ENCODE measurements at regions of chr12 and their contacts with region 1.

Region 1: DNA sequence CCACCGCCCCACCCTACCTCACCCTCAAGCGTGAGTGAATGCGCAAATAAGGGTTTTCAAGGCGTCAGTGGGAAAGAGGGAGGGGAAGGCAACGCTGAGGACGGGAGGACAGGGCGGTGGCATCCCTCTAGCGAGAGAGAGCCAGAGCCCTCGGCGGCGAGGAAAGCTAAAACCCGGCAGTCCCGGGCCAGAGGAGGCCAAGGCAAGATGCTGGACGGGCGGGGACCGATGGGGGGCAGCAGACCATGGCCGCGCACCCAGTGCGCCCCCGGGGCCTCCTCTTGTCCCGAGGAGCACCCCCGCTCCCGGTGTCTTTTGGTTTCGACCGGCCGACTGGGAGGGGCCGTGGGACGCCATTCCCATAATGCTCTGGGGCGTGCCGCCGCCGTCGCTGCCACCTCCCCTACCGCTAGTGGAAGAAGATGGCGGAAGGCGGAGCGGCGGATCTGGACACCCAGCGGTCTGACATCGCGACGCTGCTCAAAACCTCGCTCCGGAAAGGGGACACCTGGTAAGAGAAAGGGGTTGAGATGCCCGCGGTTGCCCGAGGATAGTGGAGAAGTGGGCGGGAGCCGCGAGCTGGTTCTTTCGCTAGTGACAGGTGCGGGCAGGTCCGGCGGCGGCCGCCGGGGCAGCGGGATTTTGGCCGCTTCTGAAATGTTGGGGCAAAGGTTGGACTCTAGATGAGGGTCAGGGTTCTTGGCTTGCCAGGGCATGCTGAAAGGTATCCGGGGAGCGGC is at the start of gene USP15:
- DNase-seq: peak; percentile 95
- ATAC-seq: peak; percentile 82
- H3K4me3 Mint-ChIP-seq: peak within 1 kb of the TSS; percentile 100
- H3K27ac Mint-ChIP-seq: peak within 1 kb of the TSS; percentile 100
- H3K4me1 Mint-ChIP-seq: peaks cover 53% of the 10 kb centered on the region
- H3K27me3 Mint-ChIP-seq: no peaks in the 10 kb centered on the region
- CTCF ChIP-seq: no peak
- total RNA-seq, gene USP15: 122 and 150 TPM in 2 replicates

Region 2: GRCh38 chr12:62297321-62297720 is 37.2 kb after region 1 on chr12:
- CTCF ChIA-PET with region 1: no interaction called
- POLR2A ChIA-PET with region 1: no interaction called
- intact Hi-C with region 1: loop called (anchors 5 kb)
- DNase-seq: no peak
- ATAC-seq: no peak
- H3K4me3 Mint-ChIP-seq: no peak overlapping the region
- H3K27ac Mint-ChIP-seq: no peak overlapping the region
- H3K4me1 Mint-ChIP-seq: peaks cover 58% of the 10 kb centered on the region
- H3K27me3 Mint-ChIP-seq: no peaks in the 10 kb centered on the region
- CTCF ChIP-seq: no peak

Region 3: DNA sequence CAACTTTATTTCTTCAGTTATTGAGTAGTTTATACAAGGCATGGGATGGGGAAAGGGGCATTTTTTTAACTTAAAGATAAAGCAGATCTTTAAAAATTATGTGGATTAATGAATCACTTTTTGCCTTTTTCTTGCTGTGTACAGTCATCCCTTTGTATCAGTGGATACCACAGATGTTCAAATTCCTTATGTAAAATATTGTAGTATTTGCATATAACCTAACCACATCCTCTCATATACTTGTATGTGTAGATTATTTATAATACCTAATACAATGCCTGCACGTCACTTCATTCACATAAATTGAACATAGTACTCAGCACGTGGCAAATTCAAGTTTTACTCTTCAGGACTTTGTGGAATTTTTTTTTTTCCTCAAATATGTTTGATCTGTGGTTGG is 140.0 kb after region 1 on chr12:
- CTCF ChIA-PET with region 1: no interaction called
- POLR2A ChIA-PET with region 1: no interaction called
- intact Hi-C with region 1: loop called (anchors 5 kb)
- DNase-seq: no peak
- ATAC-seq: no peak
- H3K4me3 Mint-ChIP-seq: no peak overlapping the region
- H3K27ac Mint-ChIP-seq: no peak overlapping the region
- H3K4me1 Mint-ChIP-seq: peaks cover 21% of the 10 kb centered on the region
- H3K27me3 Mint-ChIP-seq: no peaks in the 10 kb centered on the region
- CTCF ChIP-seq: no peak

Region 4: GRCh38 chr12:62799126-62799736 is 539.1 kb after region 1 on chr12:
- CTCF ChIA-PET with region 1: no interaction called
- POLR2A ChIA-PET with region 1: no interaction called
- intact Hi-C with region 1: loop called (anchors 10 kb)
- DNase-seq: no peak
- ATAC-seq: peak; percentile 93
- H3K4me3 Mint-ChIP-seq: no peak overlapping the region
- H3K27ac Mint-ChIP-seq: no peak overlapping the region
- H3K4me1 Mint-ChIP-seq: peaks cover 3% of the 10 kb centered on the region
- H3K27me3 Mint-ChIP-seq: peaks cover 2% of the 10 kb centered on the region
- CTCF ChIP-seq: peak; percentile 75

Region 5: DNA sequence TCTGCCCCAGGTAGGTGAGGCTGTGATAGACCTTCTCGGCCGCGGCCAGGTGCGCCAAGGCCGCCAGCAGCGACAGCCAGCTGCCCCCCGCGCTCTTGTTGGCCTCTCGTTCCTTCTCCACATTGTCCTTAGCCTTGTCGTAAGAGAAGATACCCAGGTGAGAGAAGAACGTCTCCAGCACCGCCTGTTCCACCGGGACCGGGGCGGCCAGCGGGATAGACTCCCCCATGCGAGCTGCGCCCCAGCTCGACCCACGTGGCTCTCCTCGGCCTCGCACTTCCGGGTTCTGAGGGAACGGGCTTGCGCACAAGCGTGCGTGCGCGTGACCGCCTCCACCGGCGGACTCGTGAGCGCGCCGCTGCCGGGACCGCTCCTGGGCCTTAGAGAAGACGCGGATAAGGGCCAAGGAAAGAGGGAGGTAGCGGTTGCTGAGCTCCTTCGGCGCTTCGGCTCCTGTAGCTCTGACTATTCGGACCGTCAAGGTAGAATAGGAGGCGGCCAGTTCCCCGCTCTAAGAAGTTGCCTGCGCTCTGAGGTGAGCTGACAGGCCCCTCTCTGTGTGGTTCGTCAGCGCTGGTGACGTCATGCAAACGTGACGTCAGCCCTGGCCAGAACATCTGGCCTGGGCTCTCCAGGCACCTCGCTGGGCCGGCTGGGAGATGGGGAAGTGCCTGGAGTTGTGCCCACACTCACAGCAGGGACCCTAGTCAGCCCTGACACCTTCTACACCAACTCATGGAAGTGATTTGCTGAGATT is 1962.0 kb after region 1 on chr12 and contains the start of gene KICS2:
- CTCF ChIA-PET with region 1: no interaction called
- POLR2A ChIA-PET with region 1: no interaction called
- intact Hi-C with region 1: loop called (anchors 1 kb)
- DNase-seq: peak; percentile 90
- ATAC-seq: peak; percentile 86
- H3K4me3 Mint-ChIP-seq: peak within 1 kb of the TSS; percentile 96
- H3K27ac Mint-ChIP-seq: peak within 1 kb of the TSS; percentile 97
- H3K4me1 Mint-ChIP-seq: peaks cover 27% of the 10 kb centered on the region
- H3K27me3 Mint-ChIP-seq: no peaks in the 10 kb centered on the region
- CTCF ChIP-seq: no peak
- total RNA-seq, gene KICS2: 16.5 and 16.8 TPM in 2 replicates